PC-3 (cell line): ENCODE measurements at regions of chr11 and their contacts with region 1.

Region 1: DNA sequence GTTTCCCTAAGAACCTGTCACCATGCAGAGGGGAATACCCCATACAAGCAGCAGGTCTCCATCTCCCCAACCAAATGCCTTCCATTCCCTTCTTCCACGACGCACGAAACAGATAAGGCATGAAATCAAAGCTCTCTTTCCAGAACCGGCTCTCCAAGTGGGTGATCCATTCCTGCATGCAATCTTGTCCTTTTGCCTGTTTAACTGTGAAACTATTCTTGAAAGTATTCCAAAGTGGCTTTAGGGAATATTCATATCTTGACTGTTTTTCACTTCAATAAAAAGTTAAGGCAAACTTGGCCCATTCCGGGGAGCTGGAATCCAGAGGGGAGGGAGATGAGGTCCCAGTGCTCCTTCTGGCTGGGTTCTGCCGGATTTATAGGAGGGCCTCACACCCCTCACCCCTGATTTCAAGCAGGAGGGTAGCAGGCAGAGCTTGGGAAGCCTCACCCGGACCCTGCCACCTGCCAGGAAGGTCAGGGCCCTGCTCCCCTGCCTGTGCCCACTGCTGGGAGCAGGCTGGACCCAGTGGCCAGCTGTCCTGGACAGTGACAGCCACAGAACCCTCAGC is 60.9 kb downstream of the SCGB1A1 start:
- DNase-seq: no peak
- ATAC-seq: no peak
- H3K4me3 ChIP-seq: no peak overlapping the region
- H3K27ac ChIP-seq: no peak overlapping the region
- H3K4me1 ChIP-seq: peaks cover 18% of the 10 kb centered on the region
- H3K27me3 ChIP-seq: no peaks in the 10 kb centered on the region
- CTCF ChIP-seq: no peak

Region 2: DNA sequence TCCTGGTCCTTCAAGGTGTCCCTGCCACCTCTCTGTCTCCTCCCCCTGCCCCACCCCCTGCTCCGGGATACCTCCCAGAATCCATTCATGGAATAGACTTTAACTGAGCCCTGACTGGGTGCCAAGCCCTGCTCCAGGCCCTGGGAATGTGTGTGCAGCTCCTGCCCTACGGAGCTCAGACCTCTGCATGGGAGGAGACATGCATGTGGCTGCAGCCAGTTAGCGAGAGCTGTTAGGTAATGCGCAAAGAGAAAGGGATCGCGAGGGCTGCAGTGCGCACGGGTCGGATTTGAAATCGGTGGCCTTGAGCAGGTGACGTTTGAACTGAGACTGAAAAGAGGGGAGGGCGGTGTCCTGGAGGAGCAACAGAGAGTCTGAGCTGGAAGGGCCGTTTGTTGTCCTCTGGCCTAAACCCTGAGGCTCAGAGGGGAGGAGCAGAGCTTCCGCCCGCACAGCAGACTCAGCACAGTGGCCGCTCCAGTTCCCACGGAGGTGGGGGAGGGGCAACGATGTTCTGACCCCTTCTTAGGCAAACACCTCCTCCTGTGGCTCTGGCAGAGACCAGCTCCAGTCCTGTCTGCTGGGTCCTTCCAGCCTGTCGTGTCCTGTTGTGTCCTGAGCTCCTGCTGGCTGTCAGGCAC is 990.9 kb before region 1 on chr11:
- CTCF ChIA-PET with region 1: no interaction called
- POLR2A ChIA-PET with region 1: interaction called, 21 read pairs
- intact Hi-C with region 1: no loop called
- DNase-seq: peak; percentile 90
- ATAC-seq: peak; percentile 73
- H3K4me3 ChIP-seq: peak overlapping the region; percentile 54
- H3K27ac ChIP-seq: peak overlapping the region; percentile 77
- H3K4me1 ChIP-seq: peaks cover 43% of the 10 kb centered on the region
- H3K27me3 ChIP-seq: no peaks in the 10 kb centered on the region
- CTCF ChIP-seq: no peak

Region 3: GRCh38 chr11:62306227-62306626 is 173.5 kb before region 1 on chr11:
- CTCF ChIA-PET with region 1: no interaction called
- POLR2A ChIA-PET with region 1: no interaction called
- intact Hi-C with region 1: no loop called
- DNase-seq: no peak
- ATAC-seq: no peak
- H3K4me3 ChIP-seq: no peak overlapping the region
- H3K27ac ChIP-seq: no peak overlapping the region
- H3K4me1 ChIP-seq: no peaks in the 10 kb centered on the region
- H3K27me3 ChIP-seq: peaks cover 63% of the 10 kb centered on the region
- CTCF ChIP-seq: no peak

Region 4: DNA sequence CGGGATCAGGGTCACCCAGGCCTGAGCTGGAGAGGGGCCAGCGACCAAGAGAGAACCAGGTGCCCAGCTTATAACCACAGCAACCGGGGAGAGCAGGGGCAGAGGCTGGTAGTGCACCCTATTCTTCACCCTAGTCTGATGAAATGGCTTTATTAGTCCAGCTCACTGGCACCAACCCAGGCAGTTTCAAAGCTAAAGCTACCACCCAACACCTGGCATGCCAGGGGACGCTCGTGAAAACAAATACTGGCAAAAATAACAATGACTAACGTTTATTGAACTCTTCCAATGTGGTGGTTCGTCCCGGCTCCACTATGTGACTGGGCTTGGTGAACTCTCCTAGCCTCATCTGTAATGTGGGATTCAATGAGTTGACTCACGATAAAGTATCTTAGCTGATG is 30.3 kb before region 1 on chr11:
- CTCF ChIA-PET with region 1: interaction called, 5 read pairs
- POLR2A ChIA-PET with region 1: no interaction called
- intact Hi-C with region 1: loop called (anchors 1 kb)
- DNase-seq: peak; percentile 96
- ATAC-seq: peak; percentile 84
- H3K4me3 ChIP-seq: no peak overlapping the region
- H3K27ac ChIP-seq: peak overlapping the region; percentile 21; the same call in 1 of the 2 replicates
- H3K4me1 ChIP-seq: peaks cover 29% of the 10 kb centered on the region
- H3K27me3 ChIP-seq: no peaks in the 10 kb centered on the region
- CTCF ChIP-seq: no peak